ENCODE measurements at regions of chr13 and their contacts with region 1.

Region 1: GRCh38 chr13:26707122-26708006 is 53.2 kb downstream of the GPR12 start:
- DNase-seq: no peak
- ATAC-seq: peak in 1 of 2 donors; percentile 61

Region 2: GRCh38 chr13:26872525-26873385 is 165.4 kb after region 1 on chr13:
- intact Hi-C with region 1: loop called (anchors 1 to 2 kb)
- DNase-seq: peak; percentile 56
- ATAC-seq: peak; percentile 37 to 44

Region 3: GRCh38 chr13:26929971-26930730 is 222.8 kb after region 1 on chr13:
- intact Hi-C with region 1: loop called (anchors 2 to 5 kb)
- DNase-seq: peak; percentile 68
- ATAC-seq: peak; percentile 78 to 82

Measured in left cardiac atrium (tissue), 4 donors.